ENCODE measurements at regions of chr15 and their contacts with region 1.

Region 1: GRCh38 chr15:79339564-79340314 is 28.8 kb downstream of the TMED3 start:
- ATAC-seq: peak in 7 of 8 experiments; percentile 32 to 52 (median 42)
- H3K4me3 ChIP-seq: no peak overlapping the region
- H3K27ac ChIP-seq: no peak overlapping the region
- H3K4me1 ChIP-seq: no peaks in the 10 kb centered on the region

Region 2: GRCh38 chr15:78944669-78945407 is 394.9 kb before region 1 on chr15 and contains the start of gene CTSH:
- in situ Hi-C with region 1: no loop called
- ATAC-seq: peak; percentile 82 to 92 (median 89)
- H3K4me3 ChIP-seq: peak within 1 kb of the TSS; percentile 27 to 39 (median 36)
- H3K27ac ChIP-seq: no peak within 1 kb of the TSS
- H3K4me1 ChIP-seq: peaks cover 0 to 5% of the 10 kb centered on the region in 2 donors
- total RNA-seq, gene CTSH: 2.0 to 98.2 (median 4.7) TPM

Region 3: DNA sequence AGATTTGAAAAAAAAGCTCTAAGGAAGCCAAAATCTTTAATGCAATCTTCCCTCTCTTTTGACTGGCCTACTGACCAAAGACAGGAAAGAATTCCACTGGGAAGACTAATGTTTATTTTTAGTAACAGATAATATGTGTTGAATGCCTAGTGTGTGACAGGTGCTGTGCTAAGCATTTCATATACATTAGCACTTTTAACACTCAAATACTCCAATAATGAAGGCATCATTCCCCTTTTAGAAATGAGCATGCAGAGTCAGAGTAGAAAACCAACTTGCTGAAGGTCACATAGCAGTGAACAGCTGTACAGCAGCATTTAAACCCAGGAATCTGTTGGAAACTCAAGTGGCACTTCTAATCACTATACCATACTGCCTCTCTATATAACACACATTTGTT is 263.0 kb after region 1 on chr15:
- in situ Hi-C with region 1: loop called in 1 of 9 experiments (anchors 10 kb)
- ATAC-seq: no peak
- H3K4me3 ChIP-seq: no peak overlapping the region
- H3K27ac ChIP-seq: no peak overlapping the region
- H3K4me1 ChIP-seq: peaks cover 0 to 15% of the 10 kb centered on the region in 2 donors

Measured in motor neuron (in vitro differentiated cells).